PC-3 (cell line): ENCODE measurements at regions of chr17 and their contacts with region 1.

Region 1: DNA sequence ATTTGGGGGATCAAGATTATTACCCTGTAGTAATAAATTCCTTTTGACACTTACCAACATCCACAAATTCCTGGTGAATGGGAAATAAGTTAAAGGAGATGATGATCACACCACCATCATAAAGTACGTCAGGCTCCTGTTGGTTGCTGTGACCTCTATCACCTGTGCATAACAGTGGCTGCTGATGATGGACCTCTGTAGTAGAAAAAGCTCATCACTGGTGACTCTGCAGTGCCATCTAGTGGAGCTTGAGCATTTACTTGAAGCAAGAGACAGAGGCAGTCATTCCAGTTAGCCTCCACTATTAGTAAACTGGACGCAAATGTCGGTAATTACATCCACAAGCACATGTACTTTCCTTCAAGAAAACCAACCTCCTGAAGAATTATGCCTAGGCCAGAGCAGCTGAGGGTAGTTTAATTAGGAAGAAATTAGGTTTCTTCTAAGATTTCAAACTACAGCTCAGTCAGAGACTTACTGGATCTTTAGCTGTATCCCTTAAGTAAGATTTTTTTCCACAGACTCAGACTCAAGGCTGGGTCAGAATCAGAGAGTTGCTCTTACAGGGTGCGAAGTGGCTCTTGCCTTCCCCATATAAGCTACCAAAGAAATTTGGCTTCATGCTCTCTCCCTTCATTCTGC is 39.3 kb downstream of the CYB561 start:
- DNase-seq: peak; percentile 97
- ATAC-seq: peak; percentile 92
- H3K4me3 ChIP-seq: no peak overlapping the region
- H3K27ac ChIP-seq: no peak overlapping the region
- H3K4me1 ChIP-seq: peaks cover 11% of the 10 kb centered on the region
- H3K27me3 ChIP-seq: no peaks in the 10 kb centered on the region
- CTCF ChIP-seq: peak; percentile 98

Region 2: GRCh38 chr17:62671583-62672312 is 735.1 kb before region 1 on chr17:
- CTCF ChIA-PET with region 1: no interaction called
- POLR2A ChIA-PET with region 1: no interaction called
- intact Hi-C with region 1: loop called (anchors 1 kb)
- DNase-seq: no peak
- ATAC-seq: peak; percentile 29
- H3K4me3 ChIP-seq: no peak overlapping the region
- H3K27ac ChIP-seq: no peak overlapping the region
- H3K4me1 ChIP-seq: peaks cover 6% of the 10 kb centered on the region
- H3K27me3 ChIP-seq: no peaks in the 10 kb centered on the region
- CTCF ChIP-seq: no peak

Region 3: GRCh38 chr17:62995377-62995885 is 411.4 kb before region 1 on chr17:
- CTCF ChIA-PET with region 1: interaction called, 21 read pairs
- POLR2A ChIA-PET with region 1: no interaction called
- intact Hi-C with region 1: loop called (anchors 1 kb)
- DNase-seq: peak; percentile 65
- ATAC-seq: peak; percentile 88
- H3K4me3 ChIP-seq: no peak overlapping the region
- H3K27ac ChIP-seq: no peak overlapping the region
- H3K4me1 ChIP-seq: no peaks in the 10 kb centered on the region
- H3K27me3 ChIP-seq: no peaks in the 10 kb centered on the region
- CTCF ChIP-seq: peak; percentile 92

Region 4: DNA sequence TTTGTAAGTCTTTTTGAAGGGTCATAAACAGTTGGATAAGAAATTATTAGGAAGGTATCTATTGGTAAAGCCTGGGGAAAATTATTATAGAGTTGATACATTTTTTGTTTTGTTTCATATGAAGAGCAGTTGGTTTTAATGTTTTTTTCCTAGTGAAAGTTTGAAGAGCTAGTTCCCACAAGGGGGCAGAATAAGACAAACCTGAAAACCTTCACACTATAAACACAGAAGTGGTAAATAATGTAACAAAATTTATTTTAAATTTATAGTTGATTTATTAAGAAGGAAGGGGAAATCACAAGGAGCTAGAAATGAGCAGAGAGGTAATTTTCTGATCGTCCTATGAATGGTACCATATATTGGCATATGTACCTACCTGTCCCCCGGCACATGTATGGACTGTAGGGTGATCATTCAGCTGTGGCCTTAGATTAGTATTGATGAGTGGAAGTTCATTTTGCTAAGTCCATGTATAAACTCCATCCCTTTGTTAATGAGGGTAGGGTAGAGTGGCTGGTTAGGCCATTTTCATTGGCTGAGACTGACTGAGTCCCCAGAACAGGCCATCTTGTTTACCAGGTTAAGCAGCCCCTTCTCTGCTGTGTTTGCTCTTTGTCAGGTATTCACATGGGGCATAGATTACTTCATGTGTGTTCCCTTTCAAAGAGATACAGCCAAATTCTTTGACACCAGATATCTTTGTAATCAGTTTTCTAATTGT is 324.4 kb before region 1 on chr17:
- CTCF ChIA-PET with region 1: interaction called, 38 read pairs
- POLR2A ChIA-PET with region 1: no interaction called
- intact Hi-C with region 1: loop called (anchors 1 kb)
- DNase-seq: peak; percentile 58
- ATAC-seq: peak; percentile 28; the same call in 1 of the 2 replicates
- H3K4me3 ChIP-seq: no peak overlapping the region
- H3K27ac ChIP-seq: no peak overlapping the region
- H3K4me1 ChIP-seq: peaks cover 4% of the 10 kb centered on the region; the same call in 1 of the 2 replicates
- H3K27me3 ChIP-seq: no peaks in the 10 kb centered on the region
- CTCF ChIP-seq: peak; percentile 77

Region 5: GRCh38 chr17:63113183-63113582 is 293.6 kb before region 1 on chr17:
- CTCF ChIA-PET with region 1: interaction called, 3 read pairs
- POLR2A ChIA-PET with region 1: no interaction called
- intact Hi-C with region 1: loop called (anchors 1 kb)
- DNase-seq: peak; percentile 55
- ATAC-seq: peak; percentile 46; the same call in 1 of the 2 replicates
- H3K4me3 ChIP-seq: no peak overlapping the region
- H3K27ac ChIP-seq: no peak overlapping the region
- H3K4me1 ChIP-seq: no peaks in the 10 kb centered on the region
- H3K27me3 ChIP-seq: no peaks in the 10 kb centered on the region
- CTCF ChIP-seq: peak; percentile 67

Region 6: GRCh38 chr17:63171428-63172393 is 235.1 kb before region 1 on chr17:
- CTCF ChIA-PET with region 1: no interaction called
- POLR2A ChIA-PET with region 1: no interaction called
- intact Hi-C with region 1: loop called (anchors 10 kb)
- DNase-seq: peak; percentile 26
- ATAC-seq: peak; percentile 53
- H3K4me3 ChIP-seq: no peak overlapping the region
- H3K27ac ChIP-seq: no peak overlapping the region
- H3K4me1 ChIP-seq: peaks cover 13% of the 10 kb centered on the region
- H3K27me3 ChIP-seq: no peaks in the 10 kb centered on the region
- CTCF ChIP-seq: no peak